T-cell (primary cell): ENCODE measurements at regions of chr19 and their contacts with region 1.

Region 1: GRCh38 chr19:19379279-19379926 is 26.1 kb upstream of the GATAD2A start:
- DNase-seq: no peak
- ATAC-seq: no peak
- H3K4me3 ChIP-seq: no peak overlapping the region
- H3K4me3 Mint-ChIP-seq: no peak overlapping the region
- H3K27ac ChIP-seq: no peak overlapping the region
- H3K27ac Mint-ChIP-seq: no peak overlapping the region
- H3K4me1 ChIP-seq: peaks cover 0 to 5% of the 10 kb centered on the region in 2 experiments
- H3K4me1 Mint-ChIP-seq: peaks cover 0 to 2% (median under 1%) of the 10 kb centered on the region in 3 donors
- H3K27me3 ChIP-seq: peaks cover 0 to 4% of the 10 kb centered on the region in 2 experiments
- H3K27me3 Mint-ChIP-seq: no peaks in the 10 kb centered on the region

Region 2: GRCh38 chr19:19315444-19315843 is 64.0 kb before region 1 on chr19:
- CTCF ChIA-PET with region 1: no interaction called
- POLR2A ChIA-PET with region 1: no interaction called
- DNase-seq: no peak
- ATAC-seq: no peak
- H3K4me3 ChIP-seq: no peak overlapping the region
- H3K4me3 Mint-ChIP-seq: no peak overlapping the region
- H3K27ac ChIP-seq: no peak overlapping the region
- H3K27ac Mint-ChIP-seq: no peak overlapping the region
- H3K4me1 ChIP-seq: peaks cover 8 to 25% of the 10 kb centered on the region in 2 experiments
- H3K4me1 Mint-ChIP-seq: peaks cover 29% of the 10 kb centered on the region in 3 donors
- H3K27me3 ChIP-seq: no peaks in the 10 kb centered on the region
- H3K27me3 Mint-ChIP-seq: no peaks in the 10 kb centered on the region

Region 3: GRCh38 chr19:19410275-19411192 is 31.1 kb after region 1 on chr19:
- CTCF ChIA-PET with region 1: interaction called in 1 of 2 experiments, 18 read pairs
- POLR2A ChIA-PET with region 1: no interaction called
- DNase-seq: peak in 11 of 35 experiments; percentile 5 to 47 (median 14)
- ATAC-seq: peak in 1 of 4 experiments; percentile 17
- H3K4me3 ChIP-seq: no peak overlapping the region
- H3K4me3 Mint-ChIP-seq: peak overlapping the region in 1 of 3 donors; percentile 4
- H3K27ac ChIP-seq: peak overlapping the region; percentile 56
- H3K27ac Mint-ChIP-seq: peak overlapping the region; percentile 74 to 85
- H3K4me1 ChIP-seq: peaks cover 14 to 68% of the 10 kb centered on the region in 2 experiments
- H3K4me1 Mint-ChIP-seq: peaks cover 75 to 76% (median 75%) of the 10 kb centered on the region in 3 donors
- H3K27me3 ChIP-seq: no peaks in the 10 kb centered on the region
- H3K27me3 Mint-ChIP-seq: no peaks in the 10 kb centered on the region